ENCODE measurements at regions of chr9 and their contacts with region 1.

Region 1: DNA sequence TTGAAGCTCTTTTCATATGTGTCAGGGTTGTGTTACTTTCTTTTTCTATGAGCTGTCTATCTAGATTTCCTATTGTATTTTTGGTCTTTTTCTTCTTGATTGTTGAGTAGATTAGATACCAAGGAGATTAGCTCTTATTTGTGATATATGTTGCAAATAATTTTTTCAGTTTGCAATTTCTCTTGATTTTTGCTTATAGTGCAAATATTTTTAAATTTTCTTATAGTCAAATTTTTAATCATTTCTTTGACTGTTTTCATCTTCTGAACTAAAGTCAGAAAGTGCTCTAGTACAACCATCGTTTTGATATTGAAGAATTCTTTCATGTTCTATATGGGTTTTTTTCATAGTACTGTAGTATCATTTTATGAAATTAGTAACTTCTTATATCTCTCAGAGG is 193.7 kb downstream of the OSTF1 start:
- DNase-seq: no peak
- ATAC-seq: no peak
- H3K4me3 ChIP-seq: no peak overlapping the region
- H3K27ac ChIP-seq: no peak overlapping the region
- H3K4me1 ChIP-seq: no peaks in the 10 kb centered on the region
- H3K27me3 ChIP-seq: no peaks in the 10 kb centered on the region
- CTCF ChIP-seq: no peak

Region 2: GRCh38 chr9:75844321-75844720 is 562.3 kb after region 1 on chr9:
- CTCF ChIA-PET with region 1: no interaction called
- POLR2A ChIA-PET with region 1: interaction called, 12 read pairs
- in situ Hi-C with region 1: no loop called
- intact Hi-C with region 1: no loop called
- DNase-seq: no peak
- ATAC-seq: no peak
- H3K4me3 ChIP-seq: no peak overlapping the region
- H3K27ac ChIP-seq: no peak overlapping the region
- H3K4me1 ChIP-seq: no peaks in the 10 kb centered on the region
- H3K27me3 ChIP-seq: no peaks in the 10 kb centered on the region
- CTCF ChIP-seq: no peak

Measured in Panc1 (cell line).